OCI-LY7 (cell line): ENCODE measurements at regions of chr3 and their contacts with region 1.

Region 1: DNA sequence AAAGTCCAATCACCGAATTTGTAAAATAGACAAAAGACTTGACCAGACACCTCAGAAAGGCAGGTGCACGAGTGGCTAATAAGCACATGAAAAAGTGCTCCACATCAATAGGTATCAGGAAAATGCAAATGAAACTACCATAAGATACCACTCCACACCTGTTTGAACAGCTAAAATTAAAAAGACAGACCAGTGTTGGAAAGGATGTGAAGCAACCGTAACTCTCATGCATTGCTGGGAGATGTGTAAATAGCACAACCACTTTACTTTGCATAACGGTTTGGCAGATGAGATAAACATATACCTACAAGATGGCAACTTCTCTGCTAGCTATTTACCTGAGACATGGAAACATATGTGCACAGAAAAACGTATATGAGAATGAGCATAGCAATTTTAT is 56.9 kb downstream of the CADPS start:
- DNase-seq: peak; percentile 96
- H3K4me3 ChIP-seq: peak overlapping the region; percentile 49
- H3K27ac ChIP-seq: peak overlapping the region; percentile 99
- H3K4me1 ChIP-seq: peaks cover 98% of the 10 kb centered on the region
- CTCF ChIP-seq: no peak

Region 2: GRCh38 chr3:62798000-62798399 is 20.3 kb before region 1 on chr3:
- CTCF ChIA-PET with region 1: interaction called, 6 read pairs
- POLR2A ChIA-PET with region 1: interaction called, 961 read pairs
- intact Hi-C with region 1: loop called (anchors 1 kb)
- DNase-seq: no peak
- H3K4me3 ChIP-seq: no peak overlapping the region
- H3K27ac ChIP-seq: peak overlapping the region; percentile 88
- H3K4me1 ChIP-seq: peaks cover 99% of the 10 kb centered on the region
- CTCF ChIP-seq: no peak

Region 3: GRCh38 chr3:62803276-62803675 is 15.1 kb before region 1 on chr3:
- CTCF ChIA-PET with region 1: interaction called, 6 read pairs
- POLR2A ChIA-PET with region 1: interaction called, 961 read pairs
- intact Hi-C with region 1: loop called (anchors 1 kb)
- DNase-seq: peak; percentile 80
- H3K4me3 ChIP-seq: no peak overlapping the region
- H3K27ac ChIP-seq: peak overlapping the region; percentile 75
- H3K4me1 ChIP-seq: peaks cover 95% of the 10 kb centered on the region
- CTCF ChIP-seq: peak; percentile 82

Region 4: DNA sequence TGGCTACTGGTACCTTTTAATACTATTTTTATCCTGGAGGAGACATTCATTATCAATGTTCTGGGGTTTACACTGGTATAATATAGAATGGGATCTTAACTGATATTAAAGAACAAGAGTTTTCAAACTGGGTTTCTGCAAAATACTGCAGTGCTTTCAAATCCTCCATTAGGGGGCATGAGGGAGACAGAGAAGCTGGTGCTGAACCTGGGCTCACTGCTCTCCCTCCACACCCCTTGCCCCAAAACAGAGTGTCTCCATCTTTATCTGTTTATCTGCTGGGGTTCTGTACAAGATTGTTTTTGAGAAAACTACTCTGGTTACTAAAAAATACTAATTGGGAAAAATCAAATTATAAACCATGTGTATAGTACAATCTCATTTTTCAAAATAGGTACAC is 15.2 kb after region 1 on chr3:
- CTCF ChIA-PET with region 1: no interaction called
- POLR2A ChIA-PET with region 1: interaction called, 961 read pairs
- intact Hi-C with region 1: no loop called
- DNase-seq: peak; percentile 66
- H3K4me3 ChIP-seq: no peak overlapping the region
- H3K27ac ChIP-seq: no peak overlapping the region
- H3K4me1 ChIP-seq: peaks cover 85% of the 10 kb centered on the region
- CTCF ChIP-seq: peak; percentile 90

Region 5: DNA sequence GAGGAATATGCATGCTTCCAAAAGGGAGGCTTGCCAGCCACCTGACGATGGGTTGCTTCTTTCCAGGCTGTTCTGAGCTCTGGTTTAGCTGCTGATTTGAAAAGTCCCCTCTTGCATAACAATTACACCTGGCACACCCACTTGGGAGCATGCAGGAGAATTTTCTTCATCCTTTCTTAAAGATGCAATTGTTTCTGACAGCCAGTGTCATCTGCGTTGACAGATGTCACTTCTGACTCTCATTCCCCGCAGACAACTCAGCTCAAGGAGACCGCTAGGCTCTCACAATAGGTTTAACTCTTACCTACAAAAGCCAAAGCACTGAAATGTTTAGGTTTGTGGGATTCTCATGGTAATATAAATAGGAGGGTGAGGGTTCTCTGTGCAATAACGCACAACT is 274.2 kb after region 1 on chr3:
- CTCF ChIA-PET with region 1: no interaction called
- POLR2A ChIA-PET with region 1: no interaction called
- intact Hi-C with region 1: no loop called
- DNase-seq: no peak
- H3K4me3 ChIP-seq: no peak overlapping the region
- H3K27ac ChIP-seq: no peak overlapping the region
- H3K4me1 ChIP-seq: no peaks in the 10 kb centered on the region
- CTCF ChIP-seq: no peak